Heart left ventricle (tissue), 16 donors: ENCODE measurements at regions of chr6 and their contacts with region 1.

Region 1: DNA sequence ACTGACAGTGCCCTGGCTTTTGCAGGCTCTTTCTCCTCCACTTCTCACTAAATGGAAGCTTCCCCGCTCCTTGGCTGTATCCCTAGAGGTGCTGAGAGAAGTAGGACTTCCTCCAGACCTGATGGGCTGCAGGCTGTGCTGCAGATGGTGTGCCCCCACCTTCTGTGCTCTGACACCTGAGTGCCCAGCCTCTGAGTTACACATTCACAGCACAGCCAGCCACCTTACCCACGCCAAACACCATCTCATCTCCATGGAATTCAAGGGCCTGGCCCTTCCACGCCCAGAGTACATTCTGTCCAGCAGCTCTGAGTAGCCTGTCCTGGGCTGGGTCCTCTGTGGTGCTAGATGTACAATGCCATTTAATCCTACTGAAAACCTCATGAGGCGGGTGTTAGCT is 5.3 kb downstream of the SFTA2 start:
- DNase-seq: peak in 2 of 5 donors; percentile 46 to 55
- ATAC-seq: peak; percentile 74 to 88 (median 81)
- H3K4me3 ChIP-seq: no peak overlapping the region
- H3K27ac ChIP-seq: peak overlapping the region in 2 of 12 donors; percentile 41 to 49
- H3K4me1 ChIP-seq: peaks cover 0 to 18% (median 0%) of the 10 kb centered on the region in 12 donors
- H3K27me3 ChIP-seq: no peaks in the 10 kb centered on the region
- CTCF ChIP-seq: no peak
- POLR2A ChIP-seq: no peak

Region 2: DNA sequence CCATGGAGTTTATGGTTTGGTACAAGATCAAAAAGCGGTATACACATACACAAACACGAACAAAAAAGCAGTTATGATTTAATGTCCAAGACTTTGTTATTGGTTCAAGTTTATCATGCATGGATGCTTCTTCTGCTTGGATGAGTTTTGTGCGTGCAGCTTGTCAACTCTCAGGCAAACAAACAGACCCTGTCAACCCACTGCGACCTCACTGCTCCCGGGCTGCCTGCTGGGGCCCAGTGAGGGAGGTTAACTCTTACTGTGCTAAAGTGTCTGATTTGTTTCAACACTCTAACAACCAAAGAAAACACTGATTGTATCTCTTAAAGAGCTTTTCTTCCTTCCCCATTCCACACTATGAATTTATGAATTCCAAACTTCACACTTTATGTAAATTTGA is 69.1 kb before region 1 on chr6:
- intact Hi-C with region 1: no loop called
- DNase-seq: no peak
- ATAC-seq: no peak
- H3K4me3 ChIP-seq: no peak overlapping the region
- H3K27ac ChIP-seq: no peak overlapping the region
- H3K4me1 ChIP-seq: no peaks in the 10 kb centered on the region
- H3K27me3 ChIP-seq: no peaks in the 10 kb centered on the region
- CTCF ChIP-seq: no peak
- POLR2A ChIP-seq: no peak

Region 3: DNA sequence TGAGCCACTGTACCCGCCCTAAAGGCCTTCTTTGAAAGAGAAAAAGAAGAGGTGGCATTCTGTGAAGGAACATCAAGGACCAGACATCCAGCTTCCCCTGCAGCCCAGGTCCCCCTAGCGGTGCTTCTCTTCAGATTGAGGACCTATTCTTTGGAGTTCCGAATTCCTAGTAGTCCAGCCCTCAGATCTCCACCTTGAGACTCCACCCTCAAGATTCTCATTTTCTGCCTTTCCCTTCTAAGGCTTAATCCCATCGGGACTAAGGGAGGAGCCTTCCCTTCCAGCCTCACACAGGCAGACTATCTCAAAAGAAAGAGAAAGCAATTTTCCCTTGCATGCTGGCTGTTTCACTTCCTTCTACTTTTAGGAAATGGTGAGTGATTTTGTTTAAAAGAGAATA is 116.2 kb after region 1 on chr6:
- intact Hi-C with region 1: loop called in 2 of 10 experiments (anchors 5 to 10 kb)
- DNase-seq: peak in 4 of 5 donors; percentile 43 to 50 (median 48)
- ATAC-seq: peak in 3 of 4 donors; percentile 52 to 63 (median 53)
- H3K4me3 ChIP-seq: no peak overlapping the region
- H3K27ac ChIP-seq: peak overlapping the region in 1 of 12 donors; percentile 38
- H3K4me1 ChIP-seq: peaks cover 0 to 14% (median 0%) of the 10 kb centered on the region in 12 donors
- H3K27me3 ChIP-seq: peaks cover 0 to 7% (median 0%) of the 10 kb centered on the region in 9 donors
- CTCF ChIP-seq: peak; percentile 30 to 60 (median 50)
- POLR2A ChIP-seq: no peak

Region 4: DNA sequence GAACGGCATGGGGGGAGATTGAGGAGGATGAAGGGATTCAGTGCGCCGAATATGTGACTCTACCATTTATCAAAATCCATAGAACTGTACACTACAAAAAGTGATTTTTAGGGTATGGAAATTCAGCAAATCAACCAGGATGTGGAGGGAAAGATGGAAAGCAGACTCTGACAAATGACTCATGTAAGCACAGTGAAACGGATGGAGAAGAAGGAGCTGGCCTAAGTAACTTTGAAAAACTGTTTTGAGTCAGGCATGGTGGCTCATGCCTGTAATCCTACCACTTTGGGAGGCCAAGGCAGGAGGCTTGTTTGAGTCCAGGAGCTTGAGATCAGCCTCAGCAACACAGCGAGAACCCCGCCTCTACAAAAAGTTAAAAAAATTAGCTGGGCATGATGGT is 122.9 kb after region 1 on chr6:
- intact Hi-C with region 1: loop called in 2 of 10 experiments (anchors 5 to 10 kb)
- DNase-seq: no peak
- ATAC-seq: no peak
- H3K4me3 ChIP-seq: no peak overlapping the region
- H3K27ac ChIP-seq: no peak overlapping the region
- H3K4me1 ChIP-seq: no peaks in the 10 kb centered on the region
- H3K27me3 ChIP-seq: peaks cover 0 to 21% (median 0%) of the 10 kb centered on the region in 9 donors
- CTCF ChIP-seq: no peak
- POLR2A ChIP-seq: no peak